Activated T-helper 2 cell treated with anti-CD3 and anti-CD28 coated beads, Interferon-gamma antibody, Interleukin-2, Interleukin-4, amounts not matched to agents 10 μg/mL and 5 μg/mL and 100 μg/mL, durations not matched to agents 14 hours and 24 hours and 36 hours (primary cell): ENCODE measurements at regions of chr4 and their contacts with region 1.

Region 1: DNA sequence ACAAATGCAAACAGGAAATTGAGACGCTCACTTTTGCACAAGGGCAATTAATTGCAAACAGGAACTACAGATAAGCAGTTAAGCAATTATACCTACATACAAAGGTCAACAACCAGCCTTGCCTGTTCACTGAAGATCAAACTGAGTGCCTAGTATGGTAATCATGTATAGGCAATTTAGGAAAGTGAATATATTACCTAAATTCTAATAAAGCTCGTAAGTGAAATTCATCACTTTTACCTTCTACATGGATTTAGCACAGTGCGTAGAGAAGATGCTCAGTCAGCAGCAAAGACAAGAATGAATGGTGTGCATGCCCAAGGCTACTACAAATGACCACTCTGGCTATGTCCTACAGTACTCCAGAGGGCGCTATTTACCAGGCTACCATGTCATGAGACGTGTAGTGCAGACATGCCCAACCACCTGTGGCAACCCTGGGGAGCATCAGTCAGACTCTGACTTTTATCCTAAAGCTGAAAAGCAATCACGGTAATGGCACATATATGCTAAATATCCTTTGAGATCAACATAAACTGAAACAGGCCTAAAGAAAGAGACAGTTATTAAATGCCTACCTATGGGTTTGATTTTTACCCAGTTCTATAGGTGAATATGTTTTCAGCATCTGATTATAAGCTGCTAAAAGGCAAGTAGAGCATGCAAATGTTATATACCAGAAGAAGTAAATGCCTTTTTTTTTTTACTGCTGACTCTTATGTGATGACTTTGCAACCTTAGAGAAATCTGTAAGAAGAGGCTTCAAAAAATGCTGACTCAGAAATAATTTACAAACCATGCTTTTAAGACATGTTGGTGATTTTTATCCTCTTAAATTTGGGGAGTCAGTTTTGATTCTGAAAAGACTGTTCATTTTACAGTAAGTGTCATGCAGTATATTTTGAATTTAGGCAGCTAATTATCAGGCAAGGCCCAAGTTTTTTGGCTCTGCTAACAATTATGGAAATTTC is 178.0 kb downstream of the PPP3CA start:
- DNase-seq: peak; percentile 32
- H3K4me3 Mint-ChIP-seq: no peak overlapping the region
- H3K27ac Mint-ChIP-seq: no peak overlapping the region
- H3K4me1 Mint-ChIP-seq: peaks cover 2% of the 10 kb centered on the region
- H3K27me3 Mint-ChIP-seq: no peaks in the 10 kb centered on the region

Region 2: DNA sequence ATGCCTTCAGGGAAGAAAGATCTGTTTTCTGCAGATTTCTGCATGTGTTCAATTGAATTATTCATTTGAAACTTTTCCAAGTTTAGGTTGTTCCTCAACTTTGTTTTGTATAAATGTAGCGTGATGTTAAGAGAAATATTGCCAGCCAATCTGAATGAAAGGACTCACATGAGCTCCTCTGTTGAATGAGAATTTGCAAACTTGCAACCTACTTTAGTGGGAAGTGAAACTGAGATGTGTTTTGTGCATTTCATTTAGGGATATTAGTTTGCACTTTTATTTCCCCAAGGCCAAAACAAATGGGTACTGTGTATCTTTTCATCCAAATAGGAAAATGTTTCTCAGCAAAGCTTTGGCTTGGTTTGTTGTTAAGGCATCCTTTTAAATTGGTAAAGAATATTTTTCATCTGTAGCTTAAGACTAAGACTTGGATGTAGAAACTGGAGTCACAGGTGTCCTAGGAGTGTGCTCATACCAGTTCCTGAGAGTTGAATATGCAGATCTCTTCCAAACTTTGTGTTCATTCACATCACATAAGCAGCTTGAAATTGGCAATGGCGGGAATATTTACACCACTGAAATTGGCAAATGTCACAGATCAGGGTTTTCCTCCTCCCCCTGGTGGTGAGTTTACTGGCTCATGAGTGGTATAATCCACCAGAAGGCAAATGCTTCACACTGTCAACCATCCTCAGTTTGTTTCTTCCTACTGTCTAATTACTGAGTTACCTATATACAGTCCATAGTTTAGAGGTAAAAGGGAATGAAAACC is 427.6 kb after region 1 on chr4:
- intact Hi-C with region 1: loop called (anchors 1 kb)
- DNase-seq: no peak
- H3K4me3 Mint-ChIP-seq: no peak overlapping the region
- H3K27ac Mint-ChIP-seq: no peak overlapping the region
- H3K4me1 Mint-ChIP-seq: peaks cover 1% of the 10 kb centered on the region
- H3K27me3 Mint-ChIP-seq: peaks cover 3% of the 10 kb centered on the region

Region 3: DNA sequence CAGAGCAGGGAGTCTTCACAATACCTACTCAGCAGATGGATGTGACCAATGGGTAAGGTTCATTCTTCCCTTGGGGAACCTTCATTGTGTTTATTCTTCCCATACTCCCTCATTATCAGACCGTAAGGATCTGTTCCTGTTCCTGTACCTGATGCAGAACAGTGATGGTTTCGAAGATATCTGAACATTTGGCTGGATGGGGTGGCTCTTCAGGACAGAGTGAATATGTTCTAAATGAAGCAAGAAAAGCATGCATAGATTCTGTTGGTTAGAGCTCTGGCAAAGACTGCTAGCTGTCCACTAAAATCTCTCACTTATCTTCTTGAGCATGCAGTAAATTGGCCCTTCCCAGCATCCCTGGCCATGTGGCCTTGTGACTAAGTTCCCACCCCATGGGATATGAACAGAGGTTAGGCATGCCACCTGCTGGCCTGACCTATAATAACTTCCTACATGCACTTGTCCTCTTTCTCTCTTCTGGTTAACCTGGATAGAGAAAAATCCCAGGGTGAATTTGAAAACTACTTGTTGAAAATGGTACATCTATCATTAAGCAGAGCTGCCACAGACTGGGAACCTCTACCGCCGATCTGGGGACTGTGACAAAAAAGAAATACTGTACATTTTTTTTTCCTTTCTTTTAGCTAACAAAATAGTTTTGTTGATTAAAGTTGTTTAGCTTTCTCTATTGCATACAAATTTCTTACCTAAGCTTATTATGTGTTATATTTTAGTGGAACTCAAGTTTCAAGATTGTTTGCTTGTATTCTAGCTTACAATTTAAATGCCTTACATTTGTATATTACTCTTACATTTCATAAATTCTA is 561.2 kb after region 1 on chr4:
- intact Hi-C with region 1: loop called (anchors 1 kb)
- DNase-seq: peak; percentile 16
- H3K4me3 Mint-ChIP-seq: no peak overlapping the region
- H3K27ac Mint-ChIP-seq: no peak overlapping the region
- H3K4me1 Mint-ChIP-seq: no peaks in the 10 kb centered on the region
- H3K27me3 Mint-ChIP-seq: peaks cover 6% of the 10 kb centered on the region

Region 4: GRCh38 chr4:101987623-101988243 is 818.4 kb after region 1 on chr4:
- intact Hi-C with region 1: no loop called
- DNase-seq: no peak
- H3K4me3 Mint-ChIP-seq: no peak overlapping the region
- H3K27ac Mint-ChIP-seq: no peak overlapping the region
- H3K4me1 Mint-ChIP-seq: no peaks in the 10 kb centered on the region
- H3K27me3 Mint-ChIP-seq: peaks cover 5% of the 10 kb centered on the region